ENCODE measurements at regions of chr11 and their contacts with region 1.

Region 1: GRCh38 chr11:133082851-133083488 is 449.3 kb downstream of the OPCML start:
- ATAC-seq: peak; percentile 93 to 97 (median 96)
- H3K4me3 ChIP-seq: peak overlapping the region; percentile 29 to 52 (median 37)
- H3K27ac ChIP-seq: no peak overlapping the region
- H3K4me1 ChIP-seq: peaks cover 0 to 5% of the 10 kb centered on the region in 2 donors

Region 2: GRCh38 chr11:133821776-133822175 is 738.8 kb after region 1 on chr11:
- in situ Hi-C with region 1: loop called in 6 of 9 experiments (anchors 10 to 25 kb)
- ATAC-seq: peak; percentile 67 to 91 (median 82)
- H3K4me3 ChIP-seq: no peak overlapping the region
- H3K27ac ChIP-seq: no peak overlapping the region
- H3K4me1 ChIP-seq: peaks cover 0 to 4% of the 10 kb centered on the region in 2 donors

Region 3: DNA sequence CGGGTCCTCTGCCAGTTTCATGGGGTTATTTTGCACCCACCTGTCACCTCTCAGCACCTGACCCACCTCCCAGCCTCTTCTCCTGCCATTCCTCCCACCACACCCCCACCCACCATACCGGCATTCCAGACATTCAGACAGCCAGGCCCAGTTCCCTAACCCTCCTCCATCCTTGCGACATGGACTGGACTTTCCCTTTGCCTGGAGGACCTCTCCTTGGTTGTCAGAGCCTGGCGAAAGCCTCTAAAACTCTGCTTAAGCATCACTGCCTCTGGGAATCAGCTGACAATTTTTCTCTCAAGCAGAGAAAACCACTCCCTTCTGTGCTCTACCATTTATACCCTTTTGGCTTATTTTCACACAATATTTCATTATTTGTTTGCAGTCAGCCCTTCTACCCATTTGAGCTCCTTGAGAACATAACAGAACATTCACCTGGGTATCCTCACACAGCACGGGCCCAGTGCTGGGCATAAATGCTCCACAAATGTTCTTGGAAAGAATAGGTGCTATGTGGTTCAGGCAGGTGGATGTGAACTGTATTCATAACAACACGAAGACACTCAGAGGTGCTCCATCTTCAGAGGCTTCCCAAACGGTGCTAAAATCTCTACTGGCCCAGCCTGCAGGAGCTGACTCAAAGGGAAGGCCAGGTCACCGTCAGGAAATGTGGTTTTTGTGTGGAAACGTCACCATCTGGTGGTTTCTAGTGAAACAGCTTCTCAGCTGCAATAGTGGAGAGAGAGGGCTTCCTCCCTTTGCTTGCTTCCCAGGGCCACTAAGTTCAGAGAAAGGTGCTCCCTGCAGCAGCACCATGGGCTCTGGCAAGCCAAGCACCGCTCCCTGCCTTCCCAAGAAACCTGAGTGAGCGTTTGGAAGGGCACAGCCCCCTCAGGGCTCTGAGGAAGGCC is 752.0 kb after region 1 on chr11:
- in situ Hi-C with region 1: loop called in 5 of 9 experiments (anchors 5 to 25 kb)
- ATAC-seq: peak; percentile 90 to 97 (median 94)
- H3K4me3 ChIP-seq: no peak overlapping the region
- H3K27ac ChIP-seq: no peak overlapping the region
- H3K4me1 ChIP-seq: peaks cover 0 to 2% of the 10 kb centered on the region in 2 donors

Measured in motor neuron (in vitro differentiated cells).